Activated CD4-positive, alpha-beta memory T cell treated with anti-CD3 and anti-CD28 coated beads, Interleukin-2, amount 10 ng/mL, durations not matched to agents 7 days and 5 days (primary cell): ENCODE measurements at regions of chr3 and their contacts with region 1.

Region 1: DNA sequence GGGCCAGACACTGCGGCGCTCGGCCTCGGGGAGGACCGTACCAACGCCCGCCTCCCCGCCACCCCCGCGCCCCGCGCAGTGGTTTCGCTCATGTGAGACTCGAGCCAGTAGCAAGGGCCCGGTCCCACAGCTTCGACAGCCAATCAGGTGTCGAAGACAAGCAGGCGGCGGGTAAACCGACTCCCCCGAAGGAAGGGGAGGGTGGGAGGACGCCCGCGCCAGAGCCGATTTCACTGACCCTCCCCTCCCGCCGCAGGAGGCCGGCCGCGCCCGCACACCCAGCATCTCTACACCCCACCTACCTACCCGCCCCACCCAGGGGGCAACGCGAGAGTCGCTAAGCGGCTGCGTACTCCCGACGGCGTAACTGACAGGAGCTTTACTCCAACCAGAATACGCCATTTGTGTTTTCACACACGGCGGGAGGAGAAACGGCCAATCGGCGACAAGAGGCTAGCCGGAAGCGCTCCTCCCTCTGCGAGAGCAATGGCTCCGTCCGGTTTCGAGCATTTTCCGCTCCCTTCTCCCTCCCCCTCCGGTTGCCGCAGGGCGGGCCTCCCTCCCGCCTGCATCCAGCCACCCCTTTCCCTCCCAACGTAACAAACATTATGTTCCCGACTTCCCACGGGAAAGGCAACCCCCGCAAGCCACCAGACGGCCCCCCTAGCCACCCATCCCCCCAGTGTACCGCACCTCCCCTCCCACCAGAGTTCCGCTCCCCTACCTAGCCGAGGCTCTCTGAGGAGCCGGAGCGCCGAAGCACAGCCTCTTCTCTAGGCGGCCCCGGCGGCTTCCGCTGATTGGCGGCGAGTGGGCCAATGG is 504 bp upstream of the SETD5 start:
- DNase-seq: peak; percentile 99
- H3K4me3 Mint-ChIP-seq: peak overlapping the region; percentile 97
- H3K27ac Mint-ChIP-seq: peak overlapping the region; percentile 98
- H3K4me1 Mint-ChIP-seq: peaks cover 66% of the 10 kb centered on the region
- H3K27me3 Mint-ChIP-seq: no peaks in the 10 kb centered on the region

Region 2: DNA sequence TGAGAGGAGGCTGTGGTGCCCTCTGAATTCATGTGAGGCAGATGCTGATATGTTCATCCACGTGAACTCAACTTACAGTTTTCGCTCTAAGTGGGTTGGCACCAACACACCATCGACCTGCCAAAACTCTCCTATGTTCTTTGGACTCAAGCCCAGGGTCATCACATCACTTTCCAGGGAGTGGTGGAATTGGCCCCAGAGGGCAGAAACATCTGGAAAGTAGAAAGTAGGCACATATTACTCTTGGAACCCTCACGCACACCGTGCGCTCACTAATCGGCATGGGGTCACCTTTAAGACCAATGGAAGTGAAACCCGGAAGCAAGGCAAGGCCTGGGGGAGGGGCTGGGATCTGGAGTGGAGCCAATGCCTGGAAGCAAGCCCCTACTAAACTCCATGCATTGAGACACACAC is 793.7 kb before region 1 on chr3:
- CTCF ChIA-PET with region 1: no interaction called
- POLR2A ChIA-PET with region 1: no interaction called
- DNase-seq: no peak
- H3K4me3 Mint-ChIP-seq: no peak overlapping the region
- H3K27ac Mint-ChIP-seq: no peak overlapping the region
- H3K4me1 Mint-ChIP-seq: no peaks in the 10 kb centered on the region
- H3K27me3 Mint-ChIP-seq: no peaks in the 10 kb centered on the region

Region 3: GRCh38 chr3:9238721-9239295 is 158.1 kb before region 1 on chr3:
- CTCF ChIA-PET with region 1: no interaction called
- POLR2A ChIA-PET with region 1: no interaction called
- DNase-seq: no peak
- H3K4me3 Mint-ChIP-seq: no peak overlapping the region
- H3K27ac Mint-ChIP-seq: no peak overlapping the region
- H3K4me1 Mint-ChIP-seq: no peaks in the 10 kb centered on the region
- H3K27me3 Mint-ChIP-seq: peaks cover 14% of the 10 kb centered on the region

Region 4: GRCh38 chr3:9362731-9363530 is 34.0 kb before region 1 on chr3 and contains the start of gene THUMPD3:
- CTCF ChIA-PET with region 1: interaction called, 30 read pairs
- POLR2A ChIA-PET with region 1: interaction called, 257 read pairs
- DNase-seq: peak; percentile 92
- H3K4me3 Mint-ChIP-seq: peak within 1 kb of the TSS; percentile 95
- H3K27ac Mint-ChIP-seq: peak within 1 kb of the TSS; percentile 98
- H3K4me1 Mint-ChIP-seq: peaks cover 39% of the 10 kb centered on the region
- H3K27me3 Mint-ChIP-seq: no peaks in the 10 kb centered on the region
- total RNA-seq, gene THUMPD3: 44.3 to 47.2 TPM

Region 5: DNA sequence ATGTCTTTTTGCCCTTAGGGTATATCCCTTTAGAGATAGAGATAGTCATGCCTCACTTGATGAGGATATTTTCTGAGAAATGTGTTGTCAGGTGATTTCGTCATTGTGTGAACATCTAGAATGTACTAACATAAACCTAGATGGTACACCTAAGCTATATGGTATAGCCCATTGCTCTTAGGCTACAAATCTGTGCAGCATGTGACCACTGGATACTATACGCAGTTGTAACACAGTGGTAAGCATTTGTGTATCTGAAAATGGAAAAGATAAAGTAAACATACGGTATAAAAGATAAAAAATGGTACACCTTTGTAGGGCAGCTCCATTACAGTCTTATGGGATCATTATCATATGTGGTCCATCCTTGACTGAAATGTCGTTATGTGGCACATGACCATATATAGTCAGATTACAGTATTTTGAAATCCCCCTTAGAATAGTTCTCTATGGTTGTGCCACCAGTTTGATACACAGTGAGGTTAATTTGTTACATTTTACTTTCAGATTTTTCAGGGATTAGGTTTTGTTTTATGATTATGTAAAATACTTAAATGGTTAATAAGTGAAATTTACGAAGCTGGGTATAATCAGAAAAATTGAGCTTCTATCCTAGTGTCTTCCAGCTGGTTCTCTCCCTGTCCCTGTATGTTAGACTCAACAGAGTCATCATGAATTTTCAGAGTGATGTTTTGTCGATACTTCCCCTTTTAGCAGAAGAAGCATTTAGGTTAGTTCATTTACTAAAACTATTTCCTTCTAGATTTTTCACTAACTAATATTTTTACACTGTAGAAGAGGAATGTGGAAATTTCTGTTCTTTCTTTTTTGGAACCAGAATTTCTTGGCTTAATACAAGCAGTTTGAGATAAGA is 13.3 kb after region 1 on chr3:
- CTCF ChIA-PET with region 1: interaction called, 8 read pairs
- POLR2A ChIA-PET with region 1: interaction called, 14 read pairs
- DNase-seq: no peak
- H3K4me3 Mint-ChIP-seq: no peak overlapping the region
- H3K27ac Mint-ChIP-seq: no peak overlapping the region
- H3K4me1 Mint-ChIP-seq: peaks cover 41% of the 10 kb centered on the region
- H3K27me3 Mint-ChIP-seq: no peaks in the 10 kb centered on the region

Region 6: DNA sequence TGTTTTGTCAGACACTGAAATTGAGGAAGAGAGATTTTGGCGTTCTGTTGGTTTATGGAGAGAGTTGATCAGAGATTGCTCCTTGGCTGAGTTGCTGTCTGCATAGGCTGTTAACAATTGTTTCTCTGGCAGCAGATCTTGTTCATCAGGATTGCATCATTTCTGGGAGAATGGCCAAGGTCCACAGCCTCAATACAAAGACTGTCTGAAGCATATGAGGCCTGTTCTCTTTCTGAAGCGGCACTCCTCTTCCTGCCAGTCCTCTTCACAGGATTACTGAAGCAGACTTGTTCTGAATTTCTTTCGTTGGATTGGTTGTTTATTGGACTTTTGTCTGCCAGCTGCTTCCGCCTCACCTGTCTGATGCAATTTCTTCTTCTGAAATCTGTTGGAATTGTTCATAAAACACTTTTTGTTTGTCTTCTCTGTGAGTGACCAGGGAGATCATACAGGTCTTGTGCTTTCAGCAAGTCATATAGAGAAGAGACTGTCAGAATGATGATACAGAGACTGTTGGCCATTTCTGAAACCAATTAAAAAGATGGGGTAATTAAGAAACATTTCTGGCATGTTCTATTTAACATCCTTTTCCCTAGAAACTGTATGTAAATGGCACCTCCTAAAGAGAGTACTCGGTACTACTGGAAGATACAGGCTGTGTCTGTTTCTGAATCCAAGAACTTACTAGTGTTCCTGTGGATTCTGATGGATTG is 26.0 kb after region 1 on chr3:
- CTCF ChIA-PET with region 1: interaction called, 5 read pairs
- POLR2A ChIA-PET with region 1: interaction called, 29 read pairs
- DNase-seq: no peak
- H3K4me3 Mint-ChIP-seq: no peak overlapping the region
- H3K27ac Mint-ChIP-seq: peak overlapping the region; percentile 60
- H3K4me1 Mint-ChIP-seq: peaks cover 38% of the 10 kb centered on the region
- H3K27me3 Mint-ChIP-seq: no peaks in the 10 kb centered on the region

Region 7: GRCh38 chr3:9649791-9650521 is 253.0 kb after region 1 on chr3:
- CTCF ChIA-PET with region 1: no interaction called
- POLR2A ChIA-PET with region 1: interaction called, 15 read pairs
- DNase-seq: peak; percentile 21
- H3K4me3 Mint-ChIP-seq: peak overlapping the region; percentile 87
- H3K27ac Mint-ChIP-seq: peak overlapping the region; percentile 87
- H3K4me1 Mint-ChIP-seq: peaks cover 18% of the 10 kb centered on the region
- H3K27me3 Mint-ChIP-seq: no peaks in the 10 kb centered on the region

Region 8: GRCh38 chr3:9792405-9793160 is 395.7 kb after region 1 on chr3 and contains the starts of genes ARPC4 and TADA3:
- CTCF ChIA-PET with region 1: interaction called, 3 read pairs
- POLR2A ChIA-PET with region 1: interaction called, 24 read pairs
- DNase-seq: peak; percentile 93
- H3K4me3 Mint-ChIP-seq: peak within 1 kb of the TSS; percentile 97
- H3K27ac Mint-ChIP-seq: peak within 1 kb of the TSS; percentile 99
- H3K4me1 Mint-ChIP-seq: peaks cover 63% of the 10 kb centered on the region
- H3K27me3 Mint-ChIP-seq: no peaks in the 10 kb centered on the region
- total RNA-seq, gene ARPC4: 255 to 266 TPM
- total RNA-seq, gene TADA3: 88.1 to 88.3 TPM